Upper lobe of right lung (tissue), 1 donor: ENCODE measurements at regions of chr19 and their contacts with region 1.

Region 1: DNA sequence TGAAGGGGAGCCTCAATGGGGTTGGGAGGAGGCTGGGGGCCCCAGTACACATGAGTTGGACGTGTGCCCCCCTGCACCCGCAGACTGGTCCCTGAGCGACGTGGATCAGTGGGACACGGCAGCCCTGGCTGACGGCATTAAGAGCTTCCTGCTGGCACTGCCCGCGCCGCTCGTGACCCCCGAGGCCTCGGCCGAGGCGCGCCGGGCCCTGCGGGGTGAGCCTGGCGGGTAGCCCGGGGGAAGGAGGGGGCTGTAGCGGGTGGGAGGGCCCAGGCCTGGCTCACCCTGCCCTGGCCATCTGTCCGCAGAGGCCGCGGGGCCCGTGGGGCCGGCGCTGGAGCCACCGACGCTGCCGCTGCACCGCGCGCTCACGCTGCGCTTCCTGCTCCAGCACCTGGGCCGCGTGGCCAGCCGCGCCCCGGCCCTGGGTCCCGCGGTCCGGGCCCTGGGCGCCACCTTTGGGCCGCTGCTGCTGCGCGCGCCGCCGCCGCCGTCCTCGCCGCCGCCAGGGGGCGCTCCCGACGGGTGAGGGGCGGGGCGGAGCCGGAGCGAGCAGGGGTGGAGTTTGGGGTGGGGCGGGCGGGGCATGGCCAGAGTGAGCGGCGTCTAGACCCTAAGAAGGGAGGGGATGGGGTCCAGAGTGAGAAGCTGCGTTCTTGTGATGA is 8.1 kb downstream of the PIK3R2 start:
- DNase-seq: peak; percentile 89
- ATAC-seq: peak; percentile 93
- H3K4me3 ChIP-seq: peak overlapping the region; percentile 42
- H3K27ac ChIP-seq: peak overlapping the region; percentile 70
- H3K4me1 ChIP-seq: peaks cover 29% of the 10 kb centered on the region
- H3K27me3 ChIP-seq: no peaks in the 10 kb centered on the region
- CTCF ChIP-seq: peak; percentile 53

Region 2: GRCh38 chr19:18117692-18118378 is 43.3 kb before region 1 on chr19:
- intact Hi-C with region 1: loop called (anchors 10 kb)
- DNase-seq: peak; percentile 97
- ATAC-seq: peak; percentile 97
- H3K4me3 ChIP-seq: peak overlapping the region; percentile 74
- H3K27ac ChIP-seq: peak overlapping the region; percentile 47
- H3K4me1 ChIP-seq: peaks cover 19% of the 10 kb centered on the region
- H3K27me3 ChIP-seq: no peaks in the 10 kb centered on the region
- CTCF ChIP-seq: no peak